Esophagus muscularis mucosa (tissue), 4 donors: ENCODE measurements at regions of chr6 and their contacts with region 1.

Region 1: DNA sequence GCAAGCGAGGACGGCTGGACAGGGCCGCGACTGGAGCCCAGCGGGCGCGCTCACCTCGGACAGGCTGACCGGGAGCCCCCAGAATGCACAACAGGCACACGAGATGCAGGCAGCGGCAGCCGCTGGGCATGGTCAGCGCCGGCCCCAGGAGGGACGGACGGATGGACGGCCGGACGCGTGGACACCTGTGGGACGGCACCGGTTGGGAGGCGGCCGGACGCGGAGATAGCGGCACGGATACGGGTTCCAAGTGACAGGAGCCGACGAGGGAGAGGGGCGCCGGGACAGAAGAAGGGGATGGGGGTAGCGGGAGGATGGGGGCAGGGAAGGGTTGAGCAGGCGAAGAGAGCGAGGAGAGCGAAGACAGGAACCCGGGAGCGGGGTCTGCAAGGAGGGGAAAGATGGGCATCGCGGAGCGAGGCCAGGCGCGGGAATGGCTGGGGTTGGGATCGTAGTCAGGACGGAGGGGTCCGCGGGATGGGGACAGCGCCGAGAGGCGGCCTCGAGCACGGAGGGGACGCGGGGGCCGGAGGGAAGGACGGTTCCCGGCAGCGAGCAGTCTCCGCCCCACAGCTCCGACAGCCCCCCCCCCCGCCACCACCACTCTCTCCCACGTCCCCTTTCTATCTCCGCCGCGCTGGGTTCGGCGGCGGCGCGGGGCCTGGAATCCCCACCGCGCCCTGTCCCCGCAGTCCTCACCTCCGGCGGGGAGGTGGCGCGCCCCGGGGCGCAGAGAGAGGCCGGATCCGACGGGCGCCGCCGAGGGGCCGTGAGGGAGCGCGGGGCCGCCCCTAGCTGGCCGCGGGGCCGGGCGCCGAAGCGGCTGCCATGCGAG is 435 bp downstream of the DLK2 start:
- DNase-seq: no peak
- H3K4me3 ChIP-seq: peak overlapping the region; percentile 54 to 64 (median 58)
- H3K27ac ChIP-seq: no peak overlapping the region
- H3K4me1 ChIP-seq: peaks cover 3 to 22% (median 20%) of the 10 kb centered on the region in 4 donors
- H3K27me3 ChIP-seq: peaks cover 0 to 54% (median 20%) of the 10 kb centered on the region in 4 donors
- CTCF ChIP-seq: no peak
- EP300 ChIP-seq: no peak
- POLR2A ChIP-seq: no peak

Region 2: GRCh38 chr6:43347021-43347420 is 107.9 kb before region 1 on chr6:
- intact Hi-C with region 1: no loop called
- DNase-seq: no peak
- H3K4me3 ChIP-seq: no peak overlapping the region
- H3K27ac ChIP-seq: no peak overlapping the region
- H3K4me1 ChIP-seq: no peaks in the 10 kb centered on the region
- H3K27me3 ChIP-seq: no peaks in the 10 kb centered on the region
- CTCF ChIP-seq: no peak
- EP300 ChIP-seq: no peak
- POLR2A ChIP-seq: no peak

Region 3: GRCh38 chr6:43369174-43370022 is 85.5 kb before region 1 on chr6 and contains the start of gene ZNF318:
- intact Hi-C with region 1: no loop called
- DNase-seq: peak; percentile 98
- H3K4me3 ChIP-seq: peak within 1 kb of the TSS; percentile 78 to 96 (median 89)
- H3K27ac ChIP-seq: peak within 1 kb of the TSS; percentile 84 to 91 (median 90)
- H3K4me1 ChIP-seq: peaks cover 18 to 37% (median 30%) of the 10 kb centered on the region in 4 donors
- H3K27me3 ChIP-seq: peaks cover 0 to 4% (median 0%) of the 10 kb centered on the region in 4 donors
- CTCF ChIP-seq: peak in 1 of 3 experiments; percentile 8
- EP300 ChIP-seq: no peak
- POLR2A ChIP-seq: no peak
- total RNA-seq, gene ZNF318: 11.1 to 17.3 (median 14.6) TPM

Region 4: GRCh38 chr6:43496370-43497128 is 41.6 kb after region 1 on chr6:
- intact Hi-C with region 1: loop called (anchors 5 kb)
- DNase-seq: no peak
- H3K4me3 ChIP-seq: no peak overlapping the region
- H3K27ac ChIP-seq: no peak overlapping the region
- H3K4me1 ChIP-seq: peaks cover 30 to 54% (median 46%) of the 10 kb centered on the region in 4 donors
- H3K27me3 ChIP-seq: no peaks in the 10 kb centered on the region
- CTCF ChIP-seq: peak; percentile 38 to 66 (median 60)
- EP300 ChIP-seq: no peak
- POLR2A ChIP-seq: no peak

Region 5: DNA sequence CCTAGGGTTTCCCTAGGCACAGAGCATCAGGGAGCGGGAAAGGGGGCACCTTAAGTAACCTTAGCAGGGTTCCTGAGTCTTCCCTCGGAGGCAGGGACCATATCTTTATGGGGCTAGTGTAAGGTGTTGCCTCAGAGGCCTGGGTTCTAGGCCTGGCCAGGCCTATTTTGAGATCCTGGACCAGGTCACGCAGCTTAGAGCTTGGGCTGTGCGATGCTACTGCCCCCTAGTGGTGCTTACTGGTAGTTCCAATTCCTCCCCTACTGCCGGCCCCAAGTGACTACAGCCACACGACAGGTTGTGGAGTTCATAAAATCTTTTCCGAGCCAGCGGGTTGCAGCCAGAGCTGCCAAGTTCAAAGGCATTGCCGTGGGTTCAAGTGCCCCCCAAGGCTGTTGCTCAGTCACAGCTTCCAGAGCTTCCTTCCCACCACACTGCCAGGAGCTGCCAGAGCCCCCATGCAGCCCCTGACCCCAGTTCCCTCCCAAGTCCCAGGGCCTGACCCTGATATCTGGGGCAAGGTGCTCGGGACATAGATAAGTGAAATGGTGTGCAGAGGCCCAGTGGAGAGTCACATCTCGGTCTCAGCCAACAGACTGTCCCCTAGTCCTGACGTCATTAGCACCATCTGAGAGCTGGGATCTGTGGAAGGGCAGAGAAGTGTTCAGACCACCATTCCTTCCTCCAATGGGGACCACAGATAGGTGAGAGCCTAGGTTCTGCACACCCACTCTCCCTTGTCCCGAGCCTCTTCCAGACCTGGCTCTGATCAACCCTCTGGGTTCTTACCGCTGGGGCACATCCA is 52.0 kb after region 1 on chr6:
- intact Hi-C with region 1: loop called (anchors 2 kb)
- DNase-seq: peak; percentile 94
- H3K4me3 ChIP-seq: no peak overlapping the region
- H3K27ac ChIP-seq: peak overlapping the region in 1 of 4 donors; percentile 35
- H3K4me1 ChIP-seq: peaks cover 26 to 37% (median 29%) of the 10 kb centered on the region in 4 donors
- H3K27me3 ChIP-seq: peaks cover 0 to 6% (median 0%) of the 10 kb centered on the region in 4 donors
- CTCF ChIP-seq: peak; percentile 92 to 99 (median 95)
- EP300 ChIP-seq: no peak
- POLR2A ChIP-seq: no peak

Region 6: DNA sequence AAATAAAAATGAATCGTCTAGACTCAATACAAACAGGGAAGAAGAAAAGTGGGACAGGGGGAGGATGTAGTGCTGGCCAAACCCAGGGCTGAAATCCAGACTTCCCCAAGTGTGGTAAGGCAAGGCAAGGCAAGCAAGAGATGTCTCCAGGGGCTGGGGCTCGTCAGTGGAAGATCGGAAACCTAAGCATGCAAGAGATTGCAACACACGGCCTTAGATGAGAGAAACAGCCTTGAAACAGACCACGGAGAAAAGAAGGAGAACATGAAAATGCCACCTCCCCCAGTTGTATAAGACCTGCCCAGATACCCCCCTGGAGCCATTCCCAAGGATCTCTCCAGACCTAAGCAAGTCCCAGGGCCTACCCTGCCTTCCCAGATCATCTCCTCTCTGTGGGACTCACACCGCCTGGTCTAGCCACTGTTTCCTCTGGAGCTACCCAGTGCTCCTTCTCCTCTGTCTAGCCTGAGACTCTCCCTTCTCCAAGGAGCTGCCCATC is 335.2 kb after region 1 on chr6:
- intact Hi-C with region 1: no loop called
- DNase-seq: no peak
- H3K4me3 ChIP-seq: no peak overlapping the region
- H3K27ac ChIP-seq: peak overlapping the region; percentile 58 to 72 (median 69)
- H3K4me1 ChIP-seq: peaks cover 0 to 13% (median 2%) of the 10 kb centered on the region in 4 donors
- H3K27me3 ChIP-seq: no peaks in the 10 kb centered on the region
- CTCF ChIP-seq: no peak
- EP300 ChIP-seq: no peak
- POLR2A ChIP-seq: no peak